ENCODE measurements at regions of chr11 and their contacts with region 1.

Region 1: GRCh38 chr11:86749376-86749775 is 51.0 kb upstream of the PRSS23 start:
- DNase-seq: no peak
- H3K4me3 ChIP-seq: no peak overlapping the region
- H3K4me3 Mint-ChIP-seq: no peak overlapping the region
- H3K27ac Mint-ChIP-seq: no peak overlapping the region
- H3K4me1 ChIP-seq: peaks cover 43% of the 10 kb centered on the region
- H3K4me1 Mint-ChIP-seq: peaks cover 49% of the 10 kb centered on the region
- H3K27me3 ChIP-seq: no peaks in the 10 kb centered on the region
- H3K27me3 Mint-ChIP-seq: no peaks in the 10 kb centered on the region
- CTCF ChIP-seq: peak; percentile 16 to 21

Region 2: DNA sequence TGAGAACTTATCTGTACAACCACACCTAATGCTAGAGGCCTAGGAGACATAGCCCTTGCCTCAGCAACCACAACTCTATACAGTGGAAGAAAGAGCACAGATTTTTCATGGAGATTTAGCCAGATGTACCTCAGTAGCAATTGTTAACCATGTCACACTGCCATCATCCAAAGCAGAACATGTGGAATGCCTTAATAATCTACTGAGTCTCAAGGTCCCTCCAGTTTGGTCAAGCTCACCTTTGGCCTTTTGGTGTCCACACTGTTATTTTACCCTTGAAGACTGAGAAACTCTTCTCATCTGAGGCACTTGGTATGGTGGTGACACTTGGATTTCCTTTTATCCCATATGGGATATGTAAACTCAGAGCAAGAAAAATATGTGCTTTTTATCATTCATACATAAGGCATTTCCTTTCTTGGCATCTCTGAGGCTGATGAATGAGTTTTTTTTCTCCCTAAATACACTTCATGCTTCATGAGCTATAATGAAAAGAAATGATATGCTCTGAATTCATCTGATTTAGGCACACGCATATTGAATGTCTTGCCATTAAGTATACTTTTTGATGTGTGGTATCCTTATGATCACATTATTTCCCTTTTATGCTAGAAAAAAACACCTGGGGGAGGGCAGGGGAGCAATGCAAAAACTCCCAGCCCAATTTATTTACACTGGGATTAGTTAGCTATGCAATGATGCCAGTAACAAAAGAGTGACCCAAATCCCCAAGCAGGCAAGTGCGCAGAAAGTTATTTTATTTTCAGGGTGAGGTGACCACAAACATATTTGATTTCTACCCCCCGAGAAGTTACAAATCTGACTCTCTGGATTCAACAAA is 13.7 kb before region 1 on chr11:
- CTCF ChIA-PET with region 1: interaction called, 3 read pairs
- POLR2A ChIA-PET with region 1: no interaction called
- intact Hi-C with region 1: loop called (anchors 1 kb)
- DNase-seq: peak in 1 of 2 experiments; percentile 65
- H3K4me3 ChIP-seq: no peak overlapping the region
- H3K4me3 Mint-ChIP-seq: peak overlapping the region; percentile 45
- H3K27ac Mint-ChIP-seq: peak overlapping the region; percentile 95
- H3K4me1 ChIP-seq: peaks cover 72% of the 10 kb centered on the region
- H3K4me1 Mint-ChIP-seq: peaks cover 62% of the 10 kb centered on the region
- H3K27me3 ChIP-seq: no peaks in the 10 kb centered on the region
- H3K27me3 Mint-ChIP-seq: no peaks in the 10 kb centered on the region
- CTCF ChIP-seq: no peak

Region 3: GRCh38 chr11:86775342-86775741 is 26.0 kb after region 1 on chr11:
- CTCF ChIA-PET with region 1: interaction called, 10 read pairs
- POLR2A ChIA-PET with region 1: interaction called, 5 read pairs
- intact Hi-C with region 1: no loop called
- DNase-seq: no peak
- H3K4me3 ChIP-seq: no peak overlapping the region
- H3K4me3 Mint-ChIP-seq: no peak overlapping the region
- H3K27ac Mint-ChIP-seq: no peak overlapping the region
- H3K4me1 ChIP-seq: peaks cover 8% of the 10 kb centered on the region; the same call in 1 of the 2 replicates
- H3K4me1 Mint-ChIP-seq: peaks cover 11% of the 10 kb centered on the region
- H3K27me3 ChIP-seq: no peaks in the 10 kb centered on the region
- H3K27me3 Mint-ChIP-seq: no peaks in the 10 kb centered on the region
- CTCF ChIP-seq: no peak